Activated CD4-positive, alpha-beta memory T cell treated with anti-CD3 and anti-CD28 coated beads for 36 hours (primary cell): ENCODE measurements at regions of chr17 and their contacts with region 1.

Region 1: GRCh38 chr17:67475236-67475937 is 98.3 kb downstream of the PITPNC1 start:
- DNase-seq: peak; percentile 92
- H3K4me3 Mint-ChIP-seq: peak overlapping the region; percentile 71
- H3K27ac Mint-ChIP-seq: peak overlapping the region; percentile 92
- H3K4me1 Mint-ChIP-seq: peaks cover 64% of the 10 kb centered on the region
- H3K27me3 Mint-ChIP-seq: no peaks in the 10 kb centered on the region

Region 2: GRCh38 chr17:67359960-67360773 is 115.2 kb before region 1 on chr17:
- CTCF ChIA-PET with region 1: interaction called, 10 read pairs
- POLR2A ChIA-PET with region 1: interaction called, 4 read pairs
- intact Hi-C with region 1: no loop called
- DNase-seq: peak; percentile 74
- H3K4me3 Mint-ChIP-seq: peak overlapping the region; percentile 65
- H3K27ac Mint-ChIP-seq: peak overlapping the region; percentile 80
- H3K4me1 Mint-ChIP-seq: peaks cover 67% of the 10 kb centered on the region
- H3K27me3 Mint-ChIP-seq: no peaks in the 10 kb centered on the region

Region 3: GRCh38 chr17:67421869-67422273 is 53.5 kb before region 1 on chr17:
- CTCF ChIA-PET with region 1: interaction called, 17 read pairs
- POLR2A ChIA-PET with region 1: interaction called, 5 read pairs
- intact Hi-C with region 1: loop called (anchors 1 kb)
- DNase-seq: peak; percentile 71
- H3K4me3 Mint-ChIP-seq: peak overlapping the region; percentile 42
- H3K27ac Mint-ChIP-seq: peak overlapping the region; percentile 91
- H3K4me1 Mint-ChIP-seq: peaks cover 74% of the 10 kb centered on the region
- H3K27me3 Mint-ChIP-seq: no peaks in the 10 kb centered on the region

Region 4: GRCh38 chr17:67441052-67441927 is 34.1 kb before region 1 on chr17:
- CTCF ChIA-PET with region 1: interaction called, 30 read pairs
- POLR2A ChIA-PET with region 1: interaction called, 14 read pairs
- intact Hi-C with region 1: loop called (anchors 2 kb)
- DNase-seq: peak; percentile 86
- H3K4me3 Mint-ChIP-seq: peak overlapping the region; percentile 84
- H3K27ac Mint-ChIP-seq: peak overlapping the region; percentile 99
- H3K4me1 Mint-ChIP-seq: peaks cover 62% of the 10 kb centered on the region
- H3K27me3 Mint-ChIP-seq: no peaks in the 10 kb centered on the region

Region 5: GRCh38 chr17:67459870-67460455 is 15.4 kb before region 1 on chr17:
- CTCF ChIA-PET with region 1: interaction called, 40 read pairs
- POLR2A ChIA-PET with region 1: no interaction called
- intact Hi-C with region 1: no loop called
- DNase-seq: no peak
- H3K4me3 Mint-ChIP-seq: no peak overlapping the region
- H3K27ac Mint-ChIP-seq: no peak overlapping the region
- H3K4me1 Mint-ChIP-seq: peaks cover 60% of the 10 kb centered on the region
- H3K27me3 Mint-ChIP-seq: no peaks in the 10 kb centered on the region

Region 6: DNA sequence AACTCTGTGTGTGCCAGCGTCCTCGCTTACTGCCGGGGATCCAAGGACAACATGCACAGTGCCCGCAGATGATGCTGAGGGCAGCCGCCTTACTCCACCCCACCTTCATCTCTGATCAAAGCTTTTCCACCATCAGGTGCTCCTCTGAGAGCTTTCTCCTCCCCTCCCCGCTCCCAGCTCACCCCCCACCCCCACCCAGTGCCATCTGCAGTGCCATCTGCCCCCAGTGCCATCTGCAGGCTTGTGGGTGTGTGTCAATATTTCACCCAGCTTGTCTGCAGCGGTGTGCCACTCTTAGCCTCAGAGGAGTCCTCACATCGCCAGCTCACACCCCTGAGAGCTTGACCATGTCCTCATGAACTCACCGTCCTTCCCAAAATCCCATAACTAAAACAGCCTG is 144.2 kb after region 1 on chr17:
- CTCF ChIA-PET with region 1: no interaction called
- POLR2A ChIA-PET with region 1: no interaction called
- intact Hi-C with region 1: no loop called
- DNase-seq: no peak
- H3K4me3 Mint-ChIP-seq: no peak overlapping the region
- H3K27ac Mint-ChIP-seq: no peak overlapping the region
- H3K4me1 Mint-ChIP-seq: no peaks in the 10 kb centered on the region
- H3K27me3 Mint-ChIP-seq: no peaks in the 10 kb centered on the region

Region 7: GRCh38 chr17:67689534-67690177 is 214.3 kb after region 1 on chr17:
- CTCF ChIA-PET with region 1: interaction called, 4 read pairs
- POLR2A ChIA-PET with region 1: no interaction called
- intact Hi-C with region 1: loop called (anchors 5 kb)
- DNase-seq: peak; percentile 34
- H3K4me3 Mint-ChIP-seq: no peak overlapping the region
- H3K27ac Mint-ChIP-seq: no peak overlapping the region
- H3K4me1 Mint-ChIP-seq: peaks cover 3% of the 10 kb centered on the region
- H3K27me3 Mint-ChIP-seq: no peaks in the 10 kb centered on the region